SK-N-SH (cell line): ENCODE measurements at regions of chr15 and their contacts with region 1.

Region 1: DNA sequence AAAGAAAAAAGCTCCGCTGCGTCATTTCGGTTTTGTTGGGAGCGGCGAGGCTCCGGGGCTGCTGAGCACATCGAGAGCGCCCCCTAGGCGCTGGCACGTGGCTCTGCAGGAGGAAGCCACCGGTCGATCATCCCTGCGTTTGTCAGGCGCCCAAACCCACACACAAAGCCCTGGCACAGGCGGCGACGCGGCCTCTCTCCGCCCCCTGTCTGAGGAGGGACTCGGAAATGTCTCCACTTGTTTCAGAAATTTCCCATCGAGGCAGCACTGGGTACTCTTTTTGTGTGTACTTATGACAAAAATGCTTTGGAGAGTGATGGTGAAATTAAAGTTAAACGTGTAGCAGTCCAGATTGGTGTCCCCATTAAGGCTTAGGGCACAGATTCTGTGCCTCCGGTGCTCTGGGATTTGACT is 407.3 kb upstream of the ONECUT1 start:
- DNase-seq: peak; percentile 75
- H3K4me3 ChIP-seq: peak overlapping the region in 1 of 2 experiments; percentile 35; a peak in 1 of 4 replicates
- H3K27ac ChIP-seq: no peak overlapping the region
- H3K4me1 ChIP-seq: no peaks in the 10 kb centered on the region; a peak in 1 of 4 replicates
- H3K27me3 ChIP-seq: peaks cover 11% of the 10 kb centered on the region; the same call in 1 of the 2 replicates
- CTCF ChIP-seq: peak; percentile 92
- EP300 ChIP-seq: no peak
- RAD21 ChIP-seq: peak; percentile 72

Region 2: GRCh38 chr15:53209389-53210042 is 12.1 kb after region 1 on chr15:
- CTCF ChIA-PET with region 1: interaction called, 14 read pairs
- POLR2A ChIA-PET with region 1: no interaction called
- DNase-seq: no peak
- H3K4me3 ChIP-seq: no peak overlapping the region
- H3K27ac ChIP-seq: no peak overlapping the region
- H3K4me1 ChIP-seq: no peaks in the 10 kb centered on the region
- H3K27me3 ChIP-seq: no peaks in the 10 kb centered on the region
- CTCF ChIP-seq: no peak
- EP300 ChIP-seq: no peak
- RAD21 ChIP-seq: no peak